ENCODE measurements at regions of chr11 and their contacts with region 1.

Region 1: DNA sequence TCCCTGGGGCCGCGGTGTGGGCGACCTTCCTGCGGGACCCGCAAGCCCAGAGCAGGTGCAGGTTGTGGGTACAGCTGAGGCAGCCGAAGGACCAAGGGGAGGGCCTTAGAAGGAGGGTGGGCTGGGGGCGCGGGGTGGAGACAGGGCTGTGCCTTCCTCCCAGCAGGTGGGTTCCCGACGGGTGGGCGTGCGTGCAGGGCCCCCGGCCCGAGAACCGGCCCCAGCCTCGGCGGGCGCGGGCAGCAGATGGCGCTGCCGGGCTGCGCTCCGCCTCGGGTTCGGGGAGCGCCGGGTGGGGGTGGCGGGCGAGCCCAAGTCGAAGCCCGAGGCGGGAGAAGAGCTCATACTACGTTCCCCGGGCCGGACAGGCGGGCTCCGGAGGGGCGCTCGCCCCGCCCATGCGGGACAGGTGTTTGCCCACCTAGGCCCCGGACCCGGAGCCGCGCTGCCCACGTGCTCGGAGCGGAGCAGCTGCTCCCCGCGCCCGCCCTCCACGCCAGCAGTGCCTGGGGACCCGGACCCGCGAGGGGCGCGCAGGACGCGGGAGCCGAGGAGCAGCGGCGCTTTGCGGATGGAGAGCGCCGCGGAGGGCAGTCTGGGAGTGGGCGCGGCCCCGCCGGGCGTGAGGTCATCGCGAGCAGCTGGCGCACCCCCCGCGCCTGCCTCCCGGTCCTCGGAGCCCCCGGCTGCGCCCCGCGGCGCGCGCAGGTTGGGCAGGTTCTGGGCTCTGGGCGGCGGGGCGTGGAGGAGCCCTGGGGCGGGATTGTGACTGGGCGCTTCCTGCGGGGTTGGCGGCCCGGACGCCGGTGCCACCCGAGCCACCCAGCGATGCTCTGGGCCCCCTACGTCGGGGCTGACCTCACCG is 25.3 kb downstream of the DUSP8 start:
- DNase-seq: peak in 1 of 3 donors; percentile 56
- ATAC-seq: peak; percentile 47 to 57 (median 52)
- H3K4me3 ChIP-seq: peak overlapping the region in 1 of 3 donors; percentile 26
- H3K27ac ChIP-seq: no peak overlapping the region
- H3K4me1 ChIP-seq: peaks cover 0 to 23% (median 0%) of the 10 kb centered on the region in 4 donors
- H3K27me3 ChIP-seq: peaks cover 0 to 5% of the 10 kb centered on the region in 2 donors
- CTCF ChIP-seq: peak; percentile 60 to 83 (median 72)
- POLR2A ChIP-seq: no peak

Region 2: DNA sequence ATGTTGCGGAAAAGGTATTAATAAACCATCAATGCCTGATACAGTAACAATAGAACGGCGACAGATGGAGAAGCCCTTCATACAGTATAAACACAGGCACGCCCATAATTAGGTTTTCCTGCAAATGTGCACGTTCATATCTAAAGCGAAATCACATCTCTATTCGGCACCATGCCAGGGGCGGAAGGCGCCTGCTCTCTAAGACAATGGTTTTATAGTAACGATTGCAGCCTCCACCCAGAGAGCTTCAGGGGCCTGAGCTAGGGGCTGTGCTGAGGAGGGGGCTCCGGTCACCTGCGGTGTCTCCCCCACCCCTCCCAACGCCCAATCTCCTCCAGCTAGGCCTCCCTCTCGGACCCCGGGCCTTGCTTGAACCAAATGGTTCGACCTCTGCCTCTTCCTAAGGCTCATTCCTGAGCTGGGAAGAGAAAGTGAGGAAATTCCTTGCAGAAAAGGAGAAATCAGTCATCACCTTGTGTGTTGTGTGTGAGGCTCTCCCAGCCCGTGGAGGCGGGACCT is 92.4 kb after region 1 on chr11:
- intact Hi-C with region 1: loop called in 1 of 2 experiments (anchors 10 kb)
- DNase-seq: no peak
- ATAC-seq: no peak
- H3K4me3 ChIP-seq: no peak overlapping the region
- H3K27ac ChIP-seq: no peak overlapping the region
- H3K4me1 ChIP-seq: no peaks in the 10 kb centered on the region
- H3K27me3 ChIP-seq: no peaks in the 10 kb centered on the region
- CTCF ChIP-seq: no peak
- POLR2A ChIP-seq: no peak

Measured in right lobe of liver (tissue), 6 donors.